A549 (cell line): ENCODE measurements at regions of chr11 and their contacts with region 1.

Region 1: DNA sequence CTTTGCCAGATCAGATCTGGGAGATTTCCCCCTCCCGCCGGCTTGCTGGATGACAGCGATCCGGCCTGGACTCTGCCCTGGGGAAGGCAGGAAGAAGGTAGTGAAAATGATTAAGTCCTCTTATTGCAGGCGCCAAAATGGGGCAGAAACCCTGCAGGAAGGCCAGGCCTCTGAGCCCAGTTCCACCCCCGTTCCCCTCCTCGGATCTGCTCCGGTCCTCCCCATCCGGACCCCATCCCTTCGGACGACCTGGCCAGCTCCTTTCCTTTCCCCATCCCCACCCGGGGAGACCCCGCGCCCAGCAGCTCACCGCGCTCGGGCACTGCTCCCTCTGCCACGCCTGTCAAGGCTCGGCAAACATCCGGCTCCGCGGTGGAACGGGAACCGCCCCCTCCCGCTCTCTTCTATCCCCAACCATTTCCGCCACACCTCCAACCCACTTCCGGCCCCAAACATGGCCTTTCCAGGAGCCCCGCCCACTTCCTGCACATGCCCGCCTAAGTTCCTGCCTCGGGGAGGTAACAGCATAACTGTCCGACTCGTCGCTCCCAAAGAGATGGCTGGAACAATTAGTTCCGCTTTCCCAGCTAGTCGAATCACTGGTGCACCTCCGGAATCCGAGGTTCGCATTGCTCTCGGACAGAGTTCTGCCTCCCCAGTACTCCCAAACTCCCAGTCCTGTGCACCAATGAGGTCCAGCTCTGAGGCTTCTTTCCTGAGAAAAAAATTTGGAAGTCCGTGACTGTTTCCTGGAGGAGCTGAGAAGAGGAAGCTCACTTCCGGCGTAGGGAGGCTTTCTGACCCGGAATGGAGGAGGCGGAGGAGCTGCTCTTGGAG is at the starts of genes ARHGAP1 and ZNF408:
- DNase-seq: peak; percentile 89 to 99
- ATAC-seq: peak; percentile 95 to 96
- H3K4me3 ChIP-seq: peak within 1 kb of the TSS; percentile 93
- H3K27ac ChIP-seq: peak within 1 kb of the TSS; percentile 99
- H3K4me1 ChIP-seq: peaks cover 24% of the 10 kb centered on the region; the same call in 2 of the 3 replicates
- CTCF ChIP-seq: no peak
- EP300 ChIP-seq: no peak
- POLR2A ChIP-seq: peak; percentile 76
- RAD21 ChIP-seq: no peak; a peak in 2 of 5 replicates
- polyA plus RNA-seq, gene ARHGAP1: 17.2 and 33.4 TPM in 2 replicates
- polyA plus RNA-seq, gene ZNF408: 6.7 TPM in 2 replicates

Region 2: GRCh38 chr11:46555269-46556054 is 145.0 kb before region 1 on chr11:
- CTCF ChIA-PET with region 1: no interaction called
- POLR2A ChIA-PET with region 1: no interaction called
- DNase-seq: no peak
- ATAC-seq: no peak
- H3K4me3 ChIP-seq: no peak overlapping the region
- H3K27ac ChIP-seq: peak overlapping the region; percentile 82 to 89
- H3K4me1 ChIP-seq: peaks cover 73% of the 10 kb centered on the region
- CTCF ChIP-seq: no peak
- EP300 ChIP-seq: no peak
- POLR2A ChIP-seq: no peak
- RAD21 ChIP-seq: no peak

Region 3: DNA sequence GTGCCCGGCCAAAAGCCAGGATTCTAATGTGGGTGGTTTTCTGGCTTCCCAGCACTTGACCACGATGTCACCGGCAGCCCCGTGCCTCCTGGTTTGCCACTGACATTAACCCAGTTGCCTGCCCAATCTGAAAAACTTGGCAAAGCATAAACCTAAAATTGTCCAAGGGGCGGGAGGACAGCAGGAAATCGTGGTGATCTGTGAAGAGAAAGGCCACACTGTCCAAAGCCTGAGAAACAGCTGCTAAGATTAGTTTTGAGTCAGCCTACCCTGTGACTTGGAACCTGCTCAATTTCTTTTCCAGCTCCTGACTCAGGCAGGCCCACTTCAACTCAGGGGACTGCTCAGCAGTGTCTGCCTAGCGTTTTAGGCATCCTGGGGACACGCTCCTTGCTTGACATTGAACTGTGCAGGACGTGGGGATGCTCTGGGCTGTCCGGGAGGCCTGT is 10.4 kb after region 1 on chr11:
- CTCF ChIA-PET with region 1: interaction called, 3 read pairs
- POLR2A ChIA-PET with region 1: interaction called, 11 read pairs
- DNase-seq: peak in 1 of 2 experiments; percentile 53
- ATAC-seq: peak; percentile 71 to 91
- H3K4me3 ChIP-seq: no peak overlapping the region
- H3K27ac ChIP-seq: peak overlapping the region; percentile 89 to 91
- H3K4me1 ChIP-seq: peaks cover 50% of the 10 kb centered on the region
- CTCF ChIP-seq: no peak
- EP300 ChIP-seq: no peak
- POLR2A ChIP-seq: no peak
- RAD21 ChIP-seq: no peak